HCT116 (cell line): ENCODE measurements at regions of chr3 and their contacts with region 1.

Region 1: DNA sequence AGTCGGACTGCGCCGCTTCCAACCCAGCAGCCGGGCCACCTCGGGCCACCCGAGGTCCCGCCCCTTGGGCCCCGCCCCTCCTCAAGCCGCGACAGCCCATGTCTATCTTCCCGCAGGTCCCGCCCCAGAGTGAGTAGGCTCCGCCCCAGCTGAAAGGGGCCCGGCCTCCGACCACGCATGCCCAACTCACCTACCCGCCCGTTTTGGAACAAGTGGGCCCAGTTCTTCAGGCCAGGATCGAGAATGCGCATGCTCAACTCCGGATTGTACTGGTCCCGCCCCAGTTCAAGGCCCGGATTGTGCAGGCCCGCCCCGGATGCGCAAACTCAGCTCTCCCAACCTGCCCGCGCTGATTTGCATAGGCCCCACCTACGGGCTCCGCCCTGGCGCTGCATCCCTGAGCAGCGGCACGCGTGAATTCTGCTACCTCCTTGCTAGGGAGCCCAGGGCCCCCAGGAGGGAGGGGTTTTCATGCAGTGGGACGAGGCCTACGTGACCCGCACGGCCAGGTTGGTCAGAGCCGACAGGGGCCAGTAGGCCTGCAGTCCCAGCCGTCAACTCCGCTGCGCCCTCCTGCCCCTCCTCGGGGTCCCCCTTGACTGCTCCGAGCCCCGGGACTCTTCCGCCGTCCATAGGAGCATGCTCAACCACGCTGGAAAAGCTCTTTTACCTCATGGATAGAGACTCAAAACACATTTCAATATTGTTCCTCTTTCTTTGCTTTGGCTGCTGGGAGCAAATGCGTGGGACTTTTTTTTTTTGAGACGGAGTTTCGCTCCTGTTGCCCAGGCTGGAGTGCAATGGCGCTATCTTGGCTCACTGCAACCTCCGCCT is at the start of gene PFKFB4:
- DNase-seq: peak; percentile 99
- ATAC-seq: peak; percentile 86
- H3K4me3 ChIP-seq: peak within 1 kb of the TSS; percentile 68 to 82
- H3K27ac ChIP-seq: peak within 1 kb of the TSS; percentile 94
- H3K4me1 ChIP-seq: peaks cover 28 to 68% of the 10 kb centered on the region in 2 experiments
- H3K27me3 ChIP-seq: no peaks in the 10 kb centered on the region
- CTCF ChIP-seq: no peak
- POLR2A ChIP-seq: peak; percentile 60
- RAD21 ChIP-seq: no peak
- total RNA-seq, gene PFKFB4: 20.3 TPM

Region 2: DNA sequence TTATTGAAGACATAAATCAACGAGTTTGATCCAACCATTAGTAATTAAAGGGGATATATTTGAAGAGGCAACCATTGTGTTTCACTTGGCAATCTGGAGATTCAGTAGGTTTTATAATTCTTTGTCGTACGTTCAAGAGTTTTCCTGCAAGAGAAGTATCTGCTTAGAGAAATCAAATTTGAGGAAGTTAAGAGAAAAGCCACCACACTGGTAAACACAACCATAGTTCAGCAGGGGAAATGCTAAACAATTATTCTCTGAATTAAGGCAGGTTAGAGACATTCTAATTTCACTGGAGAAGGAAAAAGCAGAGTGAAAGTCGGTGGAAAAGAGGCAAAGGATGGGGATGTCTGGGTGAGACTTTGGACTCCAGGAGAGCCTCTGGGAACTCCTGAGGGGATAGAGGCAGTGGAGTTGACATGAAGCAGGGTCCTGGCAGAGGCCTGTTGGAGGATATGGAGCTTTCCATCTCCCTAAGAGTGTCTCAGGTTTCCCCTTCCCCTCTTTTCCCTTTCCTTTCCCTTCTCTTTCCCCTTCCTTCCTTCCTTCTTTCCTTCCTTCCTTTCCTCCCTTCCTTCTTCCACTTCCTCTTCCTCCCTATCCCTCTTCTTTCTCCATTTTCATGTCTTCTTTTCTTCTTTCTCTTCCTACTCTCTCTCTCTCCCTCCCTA is 250.0 kb before region 1 on chr3:
- CTCF ChIA-PET with region 1: no interaction called
- POLR2A ChIA-PET with region 1: no interaction called
- RAD21 ChIA-PET with region 1: no interaction called
- intact Hi-C with region 1: no loop called
- DNase-seq: no peak
- ATAC-seq: no peak
- H3K4me3 ChIP-seq: no peak overlapping the region
- H3K27ac ChIP-seq: no peak overlapping the region
- H3K4me1 ChIP-seq: peaks cover 0 to 16% of the 10 kb centered on the region in 2 experiments; a peak in 2 of 4 replicates
- H3K27me3 ChIP-seq: 0 out of 2 replicates have a peak, but pooled peaks cover 3% of the 10 kb centered on the region
- CTCF ChIP-seq: no peak
- POLR2A ChIP-seq: no peak
- RAD21 ChIP-seq: no peak

Region 3: DNA sequence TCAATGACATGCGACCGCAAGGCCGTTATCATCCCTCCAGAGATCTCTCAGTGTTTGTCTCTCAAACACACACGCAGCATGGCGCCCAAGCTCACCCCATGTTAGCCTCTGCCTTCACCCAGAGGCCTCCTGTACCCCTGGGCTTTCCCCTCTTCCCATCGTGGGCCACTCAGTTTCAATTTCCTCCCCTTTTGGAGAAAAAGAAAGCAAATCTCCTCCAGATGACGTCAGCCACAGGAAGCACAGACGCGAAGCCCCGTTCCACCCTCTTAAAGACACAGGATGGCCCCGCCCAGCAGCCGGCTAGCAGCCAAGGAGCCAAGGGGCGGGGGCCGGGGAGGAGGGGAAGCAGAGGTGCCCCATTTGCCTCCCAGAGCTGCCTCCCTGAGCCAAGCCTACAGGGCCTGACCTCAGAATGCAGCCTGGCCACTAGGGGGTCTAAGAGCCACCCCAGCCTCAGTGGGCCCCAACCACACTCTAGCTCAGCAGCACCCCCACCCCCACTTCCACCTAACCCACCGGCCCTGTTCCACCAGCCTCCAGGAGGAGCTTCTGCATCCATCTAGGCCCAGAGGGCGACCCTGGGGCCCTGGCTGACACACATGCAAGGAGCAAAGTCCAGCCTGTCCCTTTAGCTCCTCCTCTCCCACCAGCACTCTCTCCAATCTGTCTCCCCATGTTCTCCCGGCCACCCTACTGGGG is 83.9 kb before region 1 on chr3:
- CTCF ChIA-PET with region 1: interaction called, 3 read pairs
- POLR2A ChIA-PET with region 1: interaction called, 10 read pairs
- RAD21 ChIA-PET with region 1: interaction called in 1 of 2 experiments, 3 read pairs
- intact Hi-C with region 1: no loop called
- DNase-seq: peak; percentile 77
- ATAC-seq: peak; percentile 89
- H3K4me3 ChIP-seq: peak overlapping the region; percentile 65 to 91
- H3K27ac ChIP-seq: peak overlapping the region; percentile 73
- H3K4me1 ChIP-seq: peaks cover 20 to 32% of the 10 kb centered on the region in 2 experiments; a peak in 3 of 4 replicates
- H3K27me3 ChIP-seq: no peaks in the 10 kb centered on the region
- CTCF ChIP-seq: peak in 2 of 3 experiments; percentile 32 to 54; a peak in 2 of 6 replicates
- POLR2A ChIP-seq: peak; percentile 71
- RAD21 ChIP-seq: no peak

Region 4: DNA sequence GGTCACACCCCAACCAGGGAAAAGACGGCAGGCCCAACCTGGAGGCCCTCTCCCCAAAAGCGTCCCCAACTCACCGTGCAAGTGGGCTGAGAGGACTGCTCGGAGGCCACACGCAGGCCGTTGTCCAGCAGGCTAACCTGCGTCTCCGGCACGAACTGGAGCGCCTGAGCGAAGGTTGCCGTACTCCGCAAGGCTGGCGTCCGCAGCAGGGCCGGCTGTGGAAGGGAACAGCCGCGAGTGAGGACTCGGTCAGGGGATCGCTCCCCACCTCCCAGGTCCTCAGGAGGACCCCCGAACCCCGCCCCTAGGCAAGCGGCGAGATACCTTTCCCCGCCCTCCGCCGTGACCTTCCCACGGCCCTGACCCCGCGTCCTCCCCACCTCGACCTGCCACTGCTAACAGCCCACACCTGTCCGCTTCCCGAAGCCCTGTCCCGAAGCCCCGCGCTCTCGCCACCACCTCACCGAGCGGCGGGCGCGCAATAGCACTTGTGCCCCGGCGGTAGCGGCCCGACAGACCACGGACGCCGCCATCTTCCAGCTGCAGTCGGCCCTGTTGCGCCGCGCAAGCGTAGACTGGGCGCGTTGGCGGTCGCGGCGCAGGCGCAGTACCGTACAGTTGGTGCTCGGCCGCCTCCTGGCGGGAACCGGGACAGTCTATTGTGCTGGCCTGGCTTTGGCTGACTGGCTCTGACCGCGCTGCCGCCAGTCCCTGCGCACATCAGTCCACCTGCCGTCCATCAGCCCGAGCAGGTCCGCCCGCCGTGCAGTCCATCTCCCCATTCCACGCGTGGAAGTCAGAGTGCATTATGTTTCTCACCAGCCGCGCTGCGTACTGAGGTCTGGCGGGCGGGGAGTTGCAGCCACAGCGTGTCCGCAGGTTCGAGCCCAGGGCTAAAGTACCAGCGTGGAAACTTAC is 52.3 kb after region 1 on chr3 and contains the start of gene UQCRC1:
- CTCF ChIA-PET with region 1: interaction called, 3 read pairs
- POLR2A ChIA-PET with region 1: no interaction called
- RAD21 ChIA-PET with region 1: no interaction called
- intact Hi-C with region 1: loop called (anchors 5 kb)
- DNase-seq: peak; percentile 81
- ATAC-seq: peak; percentile 99
- H3K4me3 ChIP-seq: peak within 1 kb of the TSS; percentile 81 to 84
- H3K27ac ChIP-seq: peak within 1 kb of the TSS; percentile 72
- H3K4me1 ChIP-seq: peaks cover 2 to 19% of the 10 kb centered on the region in 2 experiments; a peak in 2 of 4 replicates
- H3K27me3 ChIP-seq: no peaks in the 10 kb centered on the region
- CTCF ChIP-seq: peak; percentile 44 to 61 (median 53); a peak in 5 of 6 replicates
- POLR2A ChIP-seq: peak; percentile 93
- RAD21 ChIP-seq: peak; percentile 56
- total RNA-seq, gene UQCRC1: 318 TPM

Region 5: DNA sequence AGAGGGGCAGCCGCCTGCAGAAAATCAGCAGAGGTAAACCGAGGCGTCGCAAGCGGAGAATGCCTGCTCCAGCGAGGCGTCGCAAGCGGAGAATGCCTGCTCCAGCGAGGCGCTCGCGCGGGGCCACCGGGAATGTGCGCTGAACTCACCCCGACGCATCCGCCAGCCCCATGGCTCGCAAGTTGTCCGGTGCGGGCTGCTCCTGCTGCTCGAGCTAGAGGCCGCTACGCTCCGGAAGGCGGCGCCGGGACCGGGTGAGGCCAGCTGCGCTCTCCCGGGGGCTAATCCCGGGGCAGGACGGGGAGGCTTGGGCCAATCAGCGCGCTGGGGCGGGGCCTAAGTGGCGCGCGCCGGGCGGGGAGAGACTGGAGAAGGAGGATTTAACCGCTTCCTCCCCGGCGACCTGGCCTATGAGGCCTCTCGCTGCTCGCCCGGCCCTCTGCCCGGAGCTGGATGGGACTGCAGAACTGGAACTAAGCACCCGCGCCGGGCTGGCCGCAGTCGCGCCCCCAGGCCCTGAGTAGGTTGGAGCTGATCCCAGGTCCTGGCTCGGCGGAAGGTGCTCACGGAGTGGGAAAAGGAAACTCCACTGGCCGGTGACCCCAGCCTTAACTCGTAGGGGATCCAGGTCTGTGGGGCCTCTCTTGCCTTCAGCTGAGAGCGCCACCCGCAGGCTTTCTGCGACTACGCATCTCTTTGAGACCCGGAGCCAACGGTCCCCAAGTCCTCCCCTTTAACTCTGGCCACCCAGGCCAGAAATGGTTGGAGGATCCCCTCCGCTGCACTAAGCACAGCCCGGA is 78.4 kb after region 1 on chr3 and contains the start of gene SLC26A6:
- CTCF ChIA-PET with region 1: interaction called, 6 read pairs
- POLR2A ChIA-PET with region 1: interaction called, 4 read pairs
- RAD21 ChIA-PET with region 1: no interaction called
- intact Hi-C with region 1: loop called (anchors 2 kb)
- DNase-seq: peak; percentile 88
- ATAC-seq: peak; percentile 92
- H3K4me3 ChIP-seq: peak within 1 kb of the TSS; percentile 87 to 94
- H3K27ac ChIP-seq: peak within 1 kb of the TSS; percentile 73
- H3K4me1 ChIP-seq: peaks cover 11 to 22% of the 10 kb centered on the region in 2 experiments
- H3K27me3 ChIP-seq: no peaks in the 10 kb centered on the region
- CTCF ChIP-seq: peak in 2 of 3 experiments; percentile 80 to 82; a peak in 4 of 6 replicates
- POLR2A ChIP-seq: peak; percentile 35
- RAD21 ChIP-seq: no peak
- total RNA-seq, gene SLC26A6: 55.1 TPM

Region 6: DNA sequence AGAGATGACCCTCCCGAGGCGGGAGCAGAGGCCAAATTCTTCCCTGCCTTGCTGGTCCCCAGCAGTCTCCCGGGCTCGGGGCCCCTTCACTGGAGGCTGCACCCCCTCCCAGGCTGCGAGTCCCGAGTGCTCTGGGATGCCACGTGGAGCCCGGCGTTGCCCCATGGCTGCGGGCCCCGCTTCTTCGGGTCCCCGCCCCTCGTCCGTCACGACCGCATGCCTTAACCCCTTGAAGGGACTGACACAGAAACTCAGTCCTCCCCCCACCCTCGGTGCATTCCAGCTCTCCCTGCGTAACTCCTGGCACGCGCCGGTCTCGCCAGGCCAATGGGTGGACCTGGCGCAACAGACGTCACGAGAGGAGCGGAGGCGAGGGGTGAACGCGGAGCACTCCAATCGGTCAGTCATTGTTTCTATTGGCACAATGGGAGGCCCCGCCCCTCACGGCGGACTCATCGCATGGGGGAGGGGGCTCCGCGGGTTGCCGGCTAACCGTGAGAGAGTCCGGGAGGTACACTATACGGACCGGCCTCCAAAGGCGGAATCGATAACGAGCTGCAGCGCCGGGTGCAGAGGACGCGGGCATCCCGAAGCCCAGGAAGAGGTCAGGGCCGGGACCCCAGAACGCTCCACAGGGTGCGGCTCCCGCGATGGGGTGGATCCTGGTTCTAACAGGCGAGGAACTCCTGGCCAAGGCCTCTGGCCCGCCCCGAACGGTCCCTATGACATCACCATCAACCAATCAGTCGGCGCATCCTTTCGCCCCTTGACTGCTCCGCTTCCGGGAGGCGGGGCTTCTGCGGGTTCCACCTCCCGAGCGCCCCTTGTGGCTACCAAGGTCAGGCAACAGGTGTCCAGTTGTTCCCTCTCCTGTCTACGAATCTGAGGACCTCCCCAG is 106.7 kb after region 1 on chr3:
- CTCF ChIA-PET with region 1: interaction called, 4 read pairs
- POLR2A ChIA-PET with region 1: no interaction called
- RAD21 ChIA-PET with region 1: no interaction called
- intact Hi-C with region 1: loop called (anchors 10 kb)
- DNase-seq: peak; percentile 98
- ATAC-seq: peak; percentile 90
- H3K4me3 ChIP-seq: peak overlapping the region; percentile 55 to 56
- H3K27ac ChIP-seq: peak overlapping the region; percentile 77
- H3K4me1 ChIP-seq: peaks cover 8 to 20% of the 10 kb centered on the region in 2 experiments
- H3K27me3 ChIP-seq: no peaks in the 10 kb centered on the region
- CTCF ChIP-seq: peak in 2 of 3 experiments; percentile 87 to 92; a peak in 4 of 6 replicates
- POLR2A ChIP-seq: peak; percentile 35
- RAD21 ChIP-seq: no peak